Vagina (tissue), 2 donors: ENCODE measurements at regions of chr7 and their contacts with region 1.

Region 1: DNA sequence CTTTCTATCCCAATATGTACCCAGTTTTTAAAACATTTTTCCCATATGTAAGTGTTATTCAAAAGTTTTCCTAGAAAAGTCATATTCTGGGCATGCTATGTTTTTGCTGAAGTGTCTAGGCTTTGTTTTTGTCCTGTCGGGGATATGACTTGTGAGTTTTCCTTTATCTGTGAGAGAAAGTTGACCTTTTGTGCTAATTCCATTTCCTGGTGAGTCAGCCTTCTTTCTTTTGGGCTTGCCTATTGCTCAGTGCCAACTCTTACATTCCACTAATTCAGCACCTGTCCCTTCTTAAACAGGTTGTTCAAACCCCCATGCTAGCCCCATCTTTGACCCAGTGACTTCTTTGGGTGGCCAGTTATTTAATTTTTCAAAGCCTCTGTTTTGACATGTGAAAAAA is 146.2 kb downstream of the AHR start:
- DNase-seq: no peak
- H3K4me3 ChIP-seq: no peak overlapping the region
- H3K27ac ChIP-seq: no peak overlapping the region
- H3K4me1 ChIP-seq: no peaks in the 10 kb centered on the region
- H3K27me3 ChIP-seq: no peaks in the 10 kb centered on the region
- CTCF ChIP-seq: no peak
- POLR2A ChIP-seq: no peak

Region 2: DNA sequence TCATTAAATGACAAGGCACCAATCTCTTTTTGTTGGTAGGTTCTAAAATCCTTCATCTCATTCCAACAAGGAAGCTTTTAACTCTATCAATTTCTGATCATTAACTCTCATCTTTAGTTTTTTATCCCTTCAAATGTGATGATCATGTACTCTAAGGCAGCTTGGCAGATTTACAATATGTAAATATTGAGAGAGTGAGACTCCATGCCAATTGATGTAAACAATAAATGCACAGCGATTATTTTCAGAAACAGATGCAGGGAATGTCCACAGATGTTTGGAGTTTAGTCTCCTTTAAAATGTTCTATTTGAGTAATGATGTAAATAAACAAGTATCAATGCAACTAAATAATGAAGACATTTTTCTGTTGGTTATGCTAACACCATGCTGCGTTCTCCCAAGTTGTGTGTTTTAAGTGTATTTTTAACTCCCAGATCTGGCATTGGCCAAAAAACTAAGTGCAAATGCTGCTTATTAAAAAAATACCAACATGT is 67.6 kb after region 1 on chr7:
- intact Hi-C with region 1: loop called (anchors 5 kb)
- DNase-seq: no peak
- H3K4me3 ChIP-seq: no peak overlapping the region
- H3K27ac ChIP-seq: no peak overlapping the region
- H3K4me1 ChIP-seq: peaks cover 8% of the 10 kb centered on the region
- H3K27me3 ChIP-seq: no peaks in the 10 kb centered on the region
- CTCF ChIP-seq: no peak
- POLR2A ChIP-seq: no peak

Region 3: DNA sequence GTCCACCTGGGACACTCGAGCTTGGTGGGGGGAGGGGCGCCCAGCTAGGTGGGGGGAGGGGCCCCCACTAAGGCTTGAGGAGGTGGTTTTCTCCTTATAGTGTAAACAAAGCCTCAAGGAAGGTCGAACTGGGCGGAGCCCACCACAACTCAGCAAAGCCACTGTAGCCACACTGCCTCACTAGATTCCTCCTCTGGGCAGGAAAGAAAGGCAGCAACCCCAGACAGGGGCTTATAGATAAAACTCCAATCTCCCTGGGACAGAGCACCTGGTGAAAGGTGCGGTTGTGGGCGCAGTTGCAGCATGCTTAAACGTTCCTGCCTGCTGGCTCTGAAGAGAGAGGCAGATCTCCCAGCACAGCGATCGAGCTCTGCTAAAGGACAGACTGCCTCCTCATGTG is 362.6 kb after region 1 on chr7:
- intact Hi-C with region 1: no loop called
- DNase-seq: no peak
- H3K4me3 ChIP-seq: no peak overlapping the region
- H3K27ac ChIP-seq: no peak overlapping the region
- H3K4me1 ChIP-seq: no peaks in the 10 kb centered on the region
- H3K27me3 ChIP-seq: no peaks in the 10 kb centered on the region
- CTCF ChIP-seq: no peak
- POLR2A ChIP-seq: no peak